ENCODE measurements at regions of chr15 and their contacts with region 1.

Region 1: GRCh38 chr15:93076875-93077274 is 12.1 kb downstream of the RGMA start:
- DNase-seq: no peak
- ATAC-seq: no peak
- H3K4me3 ChIP-seq: no peak overlapping the region
- H3K4me3 Mint-ChIP-seq: no peak overlapping the region
- H3K27ac ChIP-seq: no peak overlapping the region
- H3K27ac Mint-ChIP-seq: no peak overlapping the region
- H3K4me1 ChIP-seq: peaks cover 17% of the 10 kb centered on the region
- H3K4me1 Mint-ChIP-seq: peaks cover 14 to 18% of the 10 kb centered on the region in 2 donors
- H3K27me3 ChIP-seq: peaks cover 21% of the 10 kb centered on the region
- H3K27me3 Mint-ChIP-seq: peaks cover 76 to 91% of the 10 kb centered on the region in 2 donors
- CTCF ChIP-seq: no peak

Region 2: GRCh38 chr15:93001881-93002280 is 75.0 kb before region 1 on chr15:
- intact Hi-C with region 1: loop called (anchors 2 kb)
- DNase-seq: no peak
- ATAC-seq: no peak
- H3K4me3 ChIP-seq: no peak overlapping the region
- H3K4me3 Mint-ChIP-seq: no peak overlapping the region
- H3K27ac ChIP-seq: no peak overlapping the region
- H3K27ac Mint-ChIP-seq: peak overlapping the region; percentile 46 to 47
- H3K4me1 ChIP-seq: no peaks in the 10 kb centered on the region
- H3K4me1 Mint-ChIP-seq: peaks cover 11 to 12% of the 10 kb centered on the region in 2 donors
- H3K27me3 ChIP-seq: no peaks in the 10 kb centered on the region
- H3K27me3 Mint-ChIP-seq: no peaks in the 10 kb centered on the region
- CTCF ChIP-seq: no peak